Endothelial cell of umbilical vein (primary cell): ENCODE measurements at regions of chr3 and their contacts with region 1.

Region 1: DNA sequence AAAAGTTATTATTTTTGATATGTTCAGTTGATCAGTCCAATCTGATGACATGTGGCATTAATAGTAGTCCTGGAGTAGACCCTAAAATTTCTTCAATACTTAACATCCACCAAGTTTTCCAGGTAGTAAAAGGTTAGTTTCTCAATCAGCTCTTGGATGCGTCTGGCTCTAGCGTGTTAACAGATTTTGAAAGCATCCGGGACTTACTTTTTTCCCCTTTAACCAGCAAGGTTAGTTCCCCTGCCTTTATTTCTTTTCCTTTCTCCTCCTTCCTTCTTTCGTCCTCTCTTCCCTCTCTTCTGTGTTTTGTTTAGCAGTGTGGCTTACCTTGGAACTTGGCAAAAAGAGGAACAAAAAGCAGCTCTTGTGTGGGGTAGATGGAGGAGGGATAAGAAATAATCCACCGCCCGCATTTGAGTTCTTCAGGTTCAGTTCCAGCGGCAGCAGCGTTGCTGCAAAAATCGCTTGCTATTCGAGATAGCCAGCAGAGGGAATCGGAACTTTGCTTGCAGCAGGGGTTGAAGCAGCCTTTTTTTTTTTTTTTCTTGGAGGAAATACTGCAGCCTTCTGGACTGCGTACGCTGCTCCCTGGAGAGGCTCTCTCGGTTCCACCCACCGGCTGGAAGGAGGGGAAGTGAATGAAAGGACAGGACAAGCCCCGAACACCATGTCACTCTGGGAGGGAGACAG is at the start of gene RBMS3:
- DNase-seq: peak; percentile 95
- H3K4me3 ChIP-seq: peak within 1 kb of the TSS; percentile 58 to 94 (median 77)
- H3K27ac ChIP-seq: peak within 1 kb of the TSS; percentile 97
- H3K4me1 ChIP-seq: peaks cover 31% of the 10 kb centered on the region
- H3K27me3 ChIP-seq: no peaks in the 10 kb centered on the region
- CTCF ChIP-seq: peak; percentile 35 to 66
- POLR2A ChIP-seq: no peak
- total RNA-seq, gene RBMS3: 37.3 and 42.3 TPM in 2 replicates

Region 2: GRCh38 chr3:29065211-29065785 is 215.3 kb before region 1 on chr3:
- CTCF ChIA-PET with region 1: no interaction called
- POLR2A ChIA-PET with region 1: no interaction called
- dilution Hi-C with region 1: no loop called
- intact Hi-C with region 1: loop called (anchors 1 kb)
- DNase-seq: peak; percentile 100
- H3K4me3 ChIP-seq: no peak overlapping the region
- H3K27ac ChIP-seq: peak overlapping the region; percentile 71
- H3K4me1 ChIP-seq: peaks cover 17% of the 10 kb centered on the region
- H3K27me3 ChIP-seq: no peaks in the 10 kb centered on the region
- CTCF ChIP-seq: no peak
- POLR2A ChIP-seq: no peak

Region 3: GRCh38 chr3:29083676-29084075 is 196.9 kb before region 1 on chr3:
- CTCF ChIA-PET with region 1: no interaction called
- POLR2A ChIA-PET with region 1: no interaction called
- dilution Hi-C with region 1: no loop called
- intact Hi-C with region 1: no loop called
- DNase-seq: peak; percentile 65
- H3K4me3 ChIP-seq: no peak overlapping the region
- H3K27ac ChIP-seq: no peak overlapping the region
- H3K4me1 ChIP-seq: no peaks in the 10 kb centered on the region
- H3K27me3 ChIP-seq: no peaks in the 10 kb centered on the region
- CTCF ChIP-seq: no peak
- POLR2A ChIP-seq: no peak

Region 4: GRCh38 chr3:29186982-29187725 is 93.4 kb before region 1 on chr3:
- CTCF ChIA-PET with region 1: interaction called, 4 read pairs
- POLR2A ChIA-PET with region 1: no interaction called
- dilution Hi-C with region 1: no loop called
- intact Hi-C with region 1: loop called (anchors 2 kb)
- DNase-seq: peak; percentile 76
- H3K4me3 ChIP-seq: no peak overlapping the region
- H3K27ac ChIP-seq: peak overlapping the region; percentile 90
- H3K4me1 ChIP-seq: peaks cover 17% of the 10 kb centered on the region
- H3K27me3 ChIP-seq: no peaks in the 10 kb centered on the region
- CTCF ChIP-seq: no peak
- POLR2A ChIP-seq: no peak

Region 5: GRCh38 chr3:29261119-29261518 is 19.4 kb before region 1 on chr3:
- CTCF ChIA-PET with region 1: no interaction called
- POLR2A ChIA-PET with region 1: no interaction called
- dilution Hi-C with region 1: no loop called
- intact Hi-C with region 1: no loop called
- DNase-seq: no peak
- H3K4me3 ChIP-seq: no peak overlapping the region
- H3K27ac ChIP-seq: no peak overlapping the region
- H3K4me1 ChIP-seq: no peaks in the 10 kb centered on the region
- H3K27me3 ChIP-seq: no peaks in the 10 kb centered on the region
- CTCF ChIP-seq: no peak
- POLR2A ChIP-seq: no peak

Region 6: DNA sequence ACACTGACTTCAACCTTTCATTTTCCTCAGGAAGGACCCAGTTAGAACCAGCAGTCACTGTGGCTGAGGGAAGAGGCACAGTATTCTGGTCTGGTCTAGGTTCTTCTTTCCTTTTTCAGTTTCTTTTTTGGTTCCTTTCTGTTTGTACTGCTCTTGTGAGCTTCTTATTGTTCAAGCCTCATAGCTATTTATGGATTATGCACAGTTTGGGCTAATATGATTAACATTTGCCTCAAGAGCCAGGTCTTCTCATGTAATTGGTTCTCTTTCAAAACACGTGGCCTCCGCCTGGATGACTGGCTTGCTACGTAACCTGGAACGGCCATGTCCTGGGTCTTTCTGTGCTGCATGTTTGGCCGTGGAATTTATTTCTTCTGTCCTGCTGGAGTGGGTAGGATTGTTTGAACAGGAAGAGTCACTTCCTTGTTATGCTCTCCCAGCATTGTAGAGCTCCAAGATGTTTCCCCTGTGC is 43.7 kb after region 1 on chr3:
- CTCF ChIA-PET with region 1: interaction called, 5 read pairs
- POLR2A ChIA-PET with region 1: interaction called, 5 read pairs
- dilution Hi-C with region 1: no loop called
- intact Hi-C with region 1: loop called (anchors 1 kb)
- DNase-seq: peak; percentile 98
- H3K4me3 ChIP-seq: peak overlapping the region in 2 of 3 experiments; percentile 22 to 49
- H3K27ac ChIP-seq: peak overlapping the region; percentile 98
- H3K4me1 ChIP-seq: peaks cover 22% of the 10 kb centered on the region
- H3K27me3 ChIP-seq: no peaks in the 10 kb centered on the region
- CTCF ChIP-seq: no peak
- POLR2A ChIP-seq: peak; percentile 69

Region 7: DNA sequence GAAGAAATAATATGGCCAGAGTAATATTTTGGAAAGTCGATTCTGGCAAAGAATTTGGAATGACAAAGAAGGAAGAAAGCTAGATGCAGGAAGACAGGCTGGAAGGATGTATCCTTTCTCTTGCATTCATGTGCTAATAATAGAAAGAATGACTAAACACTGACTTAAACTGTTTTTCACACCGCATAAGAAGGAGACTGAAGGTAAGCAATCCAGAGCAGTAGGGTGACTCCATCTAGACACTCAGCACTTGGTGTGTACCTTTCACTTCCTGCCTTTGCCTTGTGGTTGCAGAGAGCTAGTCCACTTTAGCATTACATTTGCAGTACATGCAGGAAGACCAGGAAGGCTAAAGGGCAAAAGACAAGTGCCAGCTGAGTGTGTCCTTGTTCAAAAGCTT is 234.9 kb after region 1 on chr3:
- CTCF ChIA-PET with region 1: no interaction called
- POLR2A ChIA-PET with region 1: no interaction called
- dilution Hi-C with region 1: no loop called
- intact Hi-C with region 1: loop called (anchors 1 kb)
- DNase-seq: peak; percentile 70
- H3K4me3 ChIP-seq: no peak overlapping the region
- H3K27ac ChIP-seq: peak overlapping the region; percentile 69
- H3K4me1 ChIP-seq: peaks cover 40% of the 10 kb centered on the region
- H3K27me3 ChIP-seq: no peaks in the 10 kb centered on the region
- CTCF ChIP-seq: no peak
- POLR2A ChIP-seq: no peak

Region 8: DNA sequence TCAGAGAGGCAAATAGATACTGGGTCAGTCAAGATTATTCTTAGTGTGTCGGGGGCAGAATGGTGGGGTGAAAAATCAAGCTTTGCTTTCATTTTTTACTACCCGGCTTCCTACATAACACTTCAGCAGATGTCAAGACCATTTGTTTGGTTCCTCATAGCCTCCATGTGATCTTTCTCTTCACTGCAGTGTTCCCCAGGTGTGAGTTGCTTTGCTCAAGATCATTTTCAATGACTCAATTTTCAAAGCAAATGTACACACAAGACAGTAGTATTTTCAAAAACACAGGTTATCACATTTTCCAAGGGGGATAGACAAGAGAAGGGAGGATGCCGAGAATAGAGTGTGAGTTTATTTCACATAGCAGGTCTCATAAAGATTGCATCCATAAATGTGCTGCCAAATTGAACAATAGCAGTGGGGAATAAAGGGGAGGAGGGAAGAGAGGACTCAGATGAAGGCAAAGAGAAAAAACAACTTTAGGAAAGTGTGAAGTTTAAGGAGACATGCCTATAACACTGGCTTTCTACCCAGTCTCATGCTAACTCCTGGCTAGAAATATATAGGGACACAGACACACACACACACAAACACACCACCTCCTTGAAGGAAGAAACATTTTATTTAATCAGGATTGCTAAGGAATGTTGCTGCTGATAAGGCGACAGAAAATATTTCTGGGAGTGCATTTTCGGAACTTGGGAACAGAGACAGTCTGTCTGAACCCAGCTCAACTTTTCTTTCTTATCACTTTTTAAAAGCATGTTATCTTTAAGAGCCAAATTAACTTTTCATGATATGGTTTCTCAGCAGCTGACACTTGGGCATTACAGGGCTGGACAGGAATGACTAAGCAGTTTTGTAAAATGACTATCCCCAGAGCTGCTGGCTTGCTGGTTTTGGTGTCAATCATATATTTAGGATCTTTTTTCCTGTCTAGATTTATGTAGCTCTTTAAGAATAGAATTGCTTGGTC is 402.8 kb after region 1 on chr3:
- CTCF ChIA-PET with region 1: interaction called, 3 read pairs
- POLR2A ChIA-PET with region 1: no interaction called
- dilution Hi-C with region 1: no loop called
- intact Hi-C with region 1: loop called (anchors 2 kb)
- DNase-seq: peak; percentile 92
- H3K4me3 ChIP-seq: no peak overlapping the region
- H3K27ac ChIP-seq: peak overlapping the region; percentile 94
- H3K4me1 ChIP-seq: peaks cover 40% of the 10 kb centered on the region
- H3K27me3 ChIP-seq: no peaks in the 10 kb centered on the region
- CTCF ChIP-seq: no peak
- POLR2A ChIP-seq: peak; percentile 47

Region 9: GRCh38 chr3:29764603-29765254 is 484.2 kb after region 1 on chr3:
- CTCF ChIA-PET with region 1: interaction called, 16 read pairs
- POLR2A ChIA-PET with region 1: interaction called, 4 read pairs
- dilution Hi-C with region 1: no loop called
- intact Hi-C with region 1: loop called (anchors 1 kb)
- DNase-seq: peak; percentile 83
- H3K4me3 ChIP-seq: no peak overlapping the region
- H3K27ac ChIP-seq: no peak overlapping the region
- H3K4me1 ChIP-seq: peaks cover 14% of the 10 kb centered on the region
- H3K27me3 ChIP-seq: no peaks in the 10 kb centered on the region
- CTCF ChIP-seq: peak; percentile 36 to 47
- POLR2A ChIP-seq: no peak